ENCODE measurements at regions of chr3 and their contacts with region 1.

Region 1: GRCh38 chr3:56988458-56989168 is 71.9 kb upstream of the SPATA12 start:
- DNase-seq: peak; percentile 84
- H3K4me3 ChIP-seq: no peak overlapping the region
- H3K27ac ChIP-seq: no peak overlapping the region
- H3K4me1 ChIP-seq: peaks cover 0 to 10% (median 6%) of the 10 kb centered on the region in 6 donors
- H3K27me3 ChIP-seq: peaks cover 0 to 9% (median 4%) of the 10 kb centered on the region in 7 donors
- CTCF ChIP-seq: peak; percentile 18 to 87 (median 77)
- POLR2A ChIP-seq: no peak

Region 2: DNA sequence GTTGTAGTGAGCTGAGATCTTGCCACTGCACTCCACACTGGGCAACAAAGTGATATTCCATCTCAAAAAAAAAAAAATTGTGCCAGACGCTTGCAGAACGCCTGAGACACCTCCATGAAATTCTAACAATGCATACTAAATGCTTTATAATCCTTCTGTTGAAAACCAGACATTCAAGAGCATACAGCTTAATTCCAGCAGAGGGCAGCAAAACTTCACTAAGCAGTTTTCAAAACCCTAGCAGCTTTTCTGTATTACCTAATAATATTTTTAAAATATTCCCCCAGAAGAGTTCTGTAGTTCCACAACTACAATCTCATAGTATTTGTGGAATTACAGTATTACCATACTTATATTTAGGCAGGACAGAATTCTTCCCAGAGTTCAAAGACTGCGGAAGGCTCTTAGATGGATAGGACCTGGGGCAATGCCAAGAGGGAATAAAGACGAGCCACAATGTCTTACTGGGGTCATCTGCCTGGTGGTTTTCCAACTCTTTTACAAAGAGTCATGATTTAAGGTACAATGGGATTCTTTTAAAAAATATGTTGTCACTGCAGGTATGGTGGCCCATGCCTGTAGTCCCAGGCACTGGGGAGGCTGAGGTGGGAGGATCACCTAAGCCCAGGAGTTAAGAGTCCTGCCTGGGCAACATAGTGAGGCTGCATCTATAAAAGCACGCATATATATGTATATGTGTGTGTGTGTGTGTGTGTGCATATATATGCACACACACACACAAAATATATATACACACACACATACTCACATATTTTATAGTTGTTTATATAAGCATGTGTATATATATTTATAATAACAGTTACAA is 285.9 kb before region 1 on chr3:
- intact Hi-C with region 1: loop called (anchors 2 kb)
- DNase-seq: no peak
- H3K4me3 ChIP-seq: no peak overlapping the region
- H3K27ac ChIP-seq: no peak overlapping the region
- H3K4me1 ChIP-seq: peaks cover 0 to 19% (median 10%) of the 10 kb centered on the region in 6 donors
- H3K27me3 ChIP-seq: no peaks in the 10 kb centered on the region
- CTCF ChIP-seq: peak; percentile 76 to 90 (median 84)
- POLR2A ChIP-seq: no peak

Region 3: GRCh38 chr3:56801662-56802377 is 186.8 kb before region 1 on chr3 and contains the start of gene ARHGEF3:
- intact Hi-C with region 1: loop called (anchors 2 kb)
- DNase-seq: peak; percentile 98
- H3K4me3 ChIP-seq: peak within 1 kb of the TSS; percentile 66 to 98 (median 76)
- H3K27ac ChIP-seq: peak within 1 kb of the TSS; percentile 64 to 91 (median 82)
- H3K4me1 ChIP-seq: peaks cover 28 to 58% (median 50%) of the 10 kb centered on the region in 6 donors
- H3K27me3 ChIP-seq: no peaks in the 10 kb centered on the region
- CTCF ChIP-seq: peak in 10 of 11 experiments; percentile 9 to 76 (median 60)
- POLR2A ChIP-seq: peak; percentile 65 to 92 (median 77)
- total RNA-seq, gene ARHGEF3: 29.6 to 35.1 (median 33.4) TPM

Region 4: DNA sequence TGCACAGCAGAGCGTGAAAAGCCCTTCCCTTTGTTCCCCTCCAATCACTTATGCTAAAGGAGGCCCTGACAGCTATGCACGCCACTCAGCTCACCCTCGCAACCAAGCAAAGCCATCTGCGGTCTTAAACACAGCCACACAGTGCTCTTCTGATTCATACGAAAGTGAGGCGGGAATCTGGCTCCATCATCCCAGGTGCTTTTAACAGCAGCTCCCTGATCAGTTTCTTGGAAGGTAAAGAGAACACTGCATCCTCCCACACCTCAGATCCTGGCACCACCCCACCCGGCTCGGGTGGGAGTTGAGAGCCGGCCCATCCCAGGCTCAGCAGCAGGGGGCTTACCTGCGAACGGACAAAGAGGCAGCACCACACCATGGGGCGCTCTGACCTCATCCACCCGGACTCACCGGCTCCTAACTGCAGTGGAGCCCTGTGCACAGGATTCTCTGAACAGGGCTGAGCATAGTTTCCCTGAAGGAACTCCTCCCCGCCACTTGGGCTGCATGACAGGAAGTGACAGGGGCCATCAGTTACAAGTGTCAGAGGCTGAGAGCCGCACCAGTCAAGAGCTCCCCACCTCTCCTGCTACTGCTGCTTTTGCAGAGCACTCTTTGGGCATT is 72.5 kb before region 1 on chr3:
- intact Hi-C with region 1: loop called (anchors 10 kb)
- DNase-seq: peak; percentile 88
- H3K4me3 ChIP-seq: peak overlapping the region; percentile 27 to 70 (median 44)
- H3K27ac ChIP-seq: peak overlapping the region in 7 of 8 donors; percentile 22 to 89 (median 79)
- H3K4me1 ChIP-seq: peaks cover 17 to 59% (median 42%) of the 10 kb centered on the region in 6 donors
- H3K27me3 ChIP-seq: no peaks in the 10 kb centered on the region
- CTCF ChIP-seq: peak in 3 of 11 experiments; percentile 12 to 16 (median 16)
- POLR2A ChIP-seq: no peak